ENCODE measurements at regions of chr14 and their contacts with region 1.

Region 1: GRCh38 chr14:92106143-92106926 is at the start of gene ATXN3:
- DNase-seq: peak; percentile 98
- ATAC-seq: peak; percentile 97
- total RNA-seq, gene ATXN3: 14.6 TPM

Region 2: DNA sequence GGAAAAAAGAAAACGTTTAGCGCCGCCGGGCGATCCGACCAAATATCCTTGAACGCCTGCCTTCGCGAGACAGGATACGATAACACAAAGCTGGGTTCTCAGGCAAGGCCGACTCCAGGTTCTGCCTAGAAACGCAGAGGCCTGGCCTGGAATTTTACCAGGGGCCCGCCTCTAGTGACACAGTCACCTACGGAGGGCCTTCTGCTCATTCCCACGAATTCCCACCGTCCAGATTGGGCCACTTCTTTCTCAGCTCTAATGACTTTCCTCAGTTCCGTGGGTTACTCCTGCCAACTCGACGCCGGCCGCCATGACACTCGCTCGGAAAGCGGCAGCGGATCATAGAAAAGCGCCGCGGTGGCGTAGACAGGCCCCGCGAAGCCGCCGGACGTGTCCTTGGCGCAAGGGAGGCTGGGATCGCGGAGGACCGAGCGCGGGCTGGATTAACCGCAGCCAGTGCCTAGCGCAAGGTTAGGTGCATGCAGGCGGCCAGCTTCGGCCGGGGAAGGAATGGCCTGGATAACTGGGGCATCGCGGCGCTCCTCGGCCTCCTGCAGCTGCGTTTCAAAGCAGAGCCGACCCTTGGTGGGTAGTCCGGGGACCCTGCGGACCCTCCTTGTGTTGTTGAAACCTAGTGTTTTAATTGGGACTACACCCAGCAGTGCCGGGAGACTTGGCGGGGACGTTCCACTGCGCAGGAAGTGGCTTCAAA is 66.5 kb before region 1 on chr14 and contains the start of gene TRIP11:
- intact Hi-C with region 1: loop called (anchors 10 kb)
- DNase-seq: peak; percentile 97
- ATAC-seq: peak; percentile 99
- total RNA-seq, gene TRIP11: 47.7 TPM